Ovary (tissue), 10 donors: ENCODE measurements at regions of chr13 and their contacts with region 1.

Region 1: GRCh38 chr13:40401911-40402776 is 264.3 kb downstream of the FOXO1 start:
- DNase-seq: peak; percentile 95 to 99 (median 98)
- H3K4me3 ChIP-seq: no peak overlapping the region
- H3K27ac ChIP-seq: peak overlapping the region in 1 of 2 donors; percentile 75
- H3K4me1 ChIP-seq: peaks cover 13% of the 10 kb centered on the region
- H3K27me3 ChIP-seq: no peaks in the 10 kb centered on the region
- CTCF ChIP-seq: no peak
- EP300 ChIP-seq: no peak
- POLR2A ChIP-seq: no peak

Region 2: DNA sequence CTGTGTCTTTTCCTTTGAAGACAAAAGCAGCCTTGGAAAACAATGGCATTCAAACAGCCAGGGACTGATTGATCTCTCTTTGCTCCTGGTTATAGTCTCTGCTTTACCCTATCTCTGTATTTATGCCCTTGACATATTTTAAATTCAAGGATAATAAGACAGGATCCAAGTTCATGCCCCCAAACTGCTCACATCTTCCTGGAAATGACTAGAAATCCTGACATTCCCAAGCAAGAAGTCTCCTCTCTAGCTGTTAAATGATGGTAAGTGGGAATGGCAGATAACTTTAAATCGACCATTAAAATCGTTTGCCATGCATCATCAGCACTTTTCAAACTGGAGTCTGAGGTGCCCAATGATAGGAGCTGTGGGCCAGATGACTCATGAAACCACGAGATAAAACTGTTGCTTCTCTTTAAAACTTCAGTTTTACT is 171.3 kb before region 1 on chr13:
- intact Hi-C with region 1: loop called in 1 of 4 experiments (anchors 10 kb)
- DNase-seq: no peak
- H3K4me3 ChIP-seq: no peak overlapping the region
- H3K27ac ChIP-seq: peak overlapping the region in 1 of 2 donors; percentile 14
- H3K4me1 ChIP-seq: peaks cover 2% of the 10 kb centered on the region
- H3K27me3 ChIP-seq: no peaks in the 10 kb centered on the region
- CTCF ChIP-seq: no peak
- EP300 ChIP-seq: no peak
- POLR2A ChIP-seq: no peak

Region 3: DNA sequence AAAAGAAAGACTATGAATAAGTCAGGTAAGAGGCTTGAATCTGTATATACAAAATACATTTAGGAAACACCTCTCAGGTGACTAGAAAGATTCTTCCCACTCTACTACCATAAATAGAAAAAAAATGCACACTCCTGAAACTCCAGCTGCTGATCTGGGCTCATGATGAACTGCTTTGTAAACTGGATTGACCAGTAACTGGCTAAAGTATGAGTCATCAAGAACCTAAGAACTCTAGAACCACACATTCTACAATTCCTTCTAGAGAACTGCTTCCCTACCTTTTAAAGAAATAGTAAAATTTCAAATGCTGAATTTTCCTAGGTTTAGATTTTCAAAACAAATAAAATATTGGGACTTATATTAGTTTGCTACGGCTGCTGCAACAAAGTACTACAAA is 561.8 kb after region 1 on chr13:
- intact Hi-C with region 1: no loop called
- DNase-seq: no peak
- H3K4me3 ChIP-seq: no peak overlapping the region
- H3K27ac ChIP-seq: no peak overlapping the region
- H3K4me1 ChIP-seq: peaks cover 8% of the 10 kb centered on the region
- H3K27me3 ChIP-seq: no peaks in the 10 kb centered on the region
- CTCF ChIP-seq: no peak
- EP300 ChIP-seq: no peak
- POLR2A ChIP-seq: no peak